ENCODE measurements at regions of chr11 and their contacts with region 1.

Region 1: GRCh38 chr11:72471005-72471898 is 36.9 kb upstream of the CLPB start:
- DNase-seq: peak; percentile 14 to 81 (median 44)
- ATAC-seq: peak; percentile 88
- H3K4me3 ChIP-seq: no peak overlapping the region
- H3K4me3 Mint-ChIP-seq: no peak overlapping the region
- H3K27ac ChIP-seq: no peak overlapping the region
- H3K27ac Mint-ChIP-seq: no peak overlapping the region
- H3K4me1 ChIP-seq: peaks cover 8% of the 10 kb centered on the region
- H3K4me1 Mint-ChIP-seq: peaks cover 4% of the 10 kb centered on the region
- H3K27me3 ChIP-seq: peaks cover 4 to 14% of the 10 kb centered on the region in 2 experiments
- H3K27me3 Mint-ChIP-seq: peaks cover 56% of the 10 kb centered on the region
- CTCF ChIP-seq: peak; percentile 86

Region 2: DNA sequence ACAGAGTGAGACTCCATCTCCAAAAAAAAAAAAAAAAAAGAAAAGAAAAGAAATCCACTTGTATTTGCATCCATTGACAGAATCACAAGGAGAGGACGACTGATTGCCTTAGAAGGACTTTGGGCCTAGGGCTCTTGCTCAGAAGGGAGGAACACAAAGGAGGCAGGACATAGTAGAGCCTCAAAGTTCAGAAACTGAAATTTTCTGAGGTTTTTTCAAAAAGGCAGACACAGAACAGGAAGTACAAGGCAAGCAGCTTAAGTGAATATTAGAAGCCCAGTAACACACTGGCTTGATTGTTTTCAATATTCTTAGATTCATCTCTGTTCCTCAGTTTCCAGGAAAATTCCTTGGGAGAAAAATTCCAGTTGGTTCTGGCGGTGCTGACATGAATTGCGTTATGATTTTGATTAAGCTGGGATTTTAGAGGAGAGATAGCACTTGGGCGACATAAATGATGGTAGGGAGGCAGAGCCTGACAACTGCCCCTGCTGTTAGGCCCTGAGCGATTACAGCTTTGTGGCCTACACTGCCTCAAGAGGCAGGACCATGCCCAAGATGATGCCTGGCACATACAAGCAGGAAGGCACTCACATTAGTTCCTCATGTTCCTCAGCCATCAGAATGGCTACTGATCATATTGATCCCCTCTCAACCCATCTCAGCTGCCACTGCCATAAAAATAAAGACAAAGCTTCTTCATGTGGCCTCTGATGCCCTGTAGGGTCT is 52.3 kb before region 1 on chr11:
- CTCF ChIA-PET with region 1: no interaction called
- POLR2A ChIA-PET with region 1: no interaction called
- intact Hi-C with region 1: no loop called
- DNase-seq: no peak
- ATAC-seq: no peak
- H3K4me3 ChIP-seq: no peak overlapping the region
- H3K4me3 Mint-ChIP-seq: no peak overlapping the region
- H3K27ac ChIP-seq: peak overlapping the region in 1 of 2 donors; percentile 8
- H3K27ac Mint-ChIP-seq: peak overlapping the region; percentile 67
- H3K4me1 ChIP-seq: peaks cover 18% of the 10 kb centered on the region
- H3K4me1 Mint-ChIP-seq: peaks cover 32% of the 10 kb centered on the region
- H3K27me3 ChIP-seq: no peaks in the 10 kb centered on the region
- H3K27me3 Mint-ChIP-seq: no peaks in the 10 kb centered on the region
- CTCF ChIP-seq: no peak

Region 3: DNA sequence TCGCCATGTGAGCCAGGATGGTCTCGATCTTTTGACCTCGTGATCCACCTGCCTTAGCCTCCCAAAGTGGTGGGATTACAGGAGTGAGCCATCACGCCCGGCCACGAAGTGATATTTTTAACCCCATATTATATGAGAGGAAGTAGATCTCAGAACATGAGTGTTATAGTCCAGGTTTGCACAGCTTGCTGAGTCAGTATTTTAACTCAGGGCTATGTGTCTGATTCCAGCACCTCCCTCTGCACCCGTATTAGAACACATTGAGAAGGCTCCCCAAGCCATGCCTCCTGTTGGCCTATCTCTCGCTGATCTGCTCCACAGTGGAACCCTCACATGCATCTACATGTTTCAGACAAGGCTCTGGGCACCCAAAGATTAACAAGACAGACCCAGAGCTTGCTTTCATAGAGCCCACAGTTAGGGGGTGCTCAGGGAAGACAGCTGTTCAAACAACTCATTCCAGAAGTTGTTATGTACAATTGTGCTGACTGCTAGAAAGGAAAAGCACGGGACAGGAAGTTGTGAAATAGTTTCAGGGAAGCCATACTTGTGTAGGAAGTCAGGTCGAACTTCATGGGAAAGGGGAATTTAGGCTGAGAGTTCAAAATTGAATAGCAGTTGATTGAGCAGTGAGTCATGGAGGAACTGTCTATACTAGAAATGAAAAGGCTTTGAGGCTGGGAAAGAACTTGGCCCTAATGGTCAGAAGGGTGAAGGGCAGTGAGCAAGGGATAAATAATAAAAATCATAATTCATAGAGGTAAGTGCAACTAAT is 12.3 kb after region 1 on chr11:
- CTCF ChIA-PET with region 1: interaction called, 12 read pairs
- POLR2A ChIA-PET with region 1: no interaction called
- intact Hi-C with region 1: no loop called
- DNase-seq: peak in 3 of 14 experiments; percentile 21 to 71 (median 61)
- ATAC-seq: no peak
- H3K4me3 ChIP-seq: no peak overlapping the region
- H3K4me3 Mint-ChIP-seq: no peak overlapping the region
- H3K27ac ChIP-seq: no peak overlapping the region
- H3K27ac Mint-ChIP-seq: no peak overlapping the region
- H3K4me1 ChIP-seq: peaks cover 14% of the 10 kb centered on the region
- H3K4me1 Mint-ChIP-seq: no peaks in the 10 kb centered on the region
- H3K27me3 ChIP-seq: no peaks in the 10 kb centered on the region
- H3K27me3 Mint-ChIP-seq: peaks cover 18% of the 10 kb centered on the region
- CTCF ChIP-seq: no peak

Region 4: DNA sequence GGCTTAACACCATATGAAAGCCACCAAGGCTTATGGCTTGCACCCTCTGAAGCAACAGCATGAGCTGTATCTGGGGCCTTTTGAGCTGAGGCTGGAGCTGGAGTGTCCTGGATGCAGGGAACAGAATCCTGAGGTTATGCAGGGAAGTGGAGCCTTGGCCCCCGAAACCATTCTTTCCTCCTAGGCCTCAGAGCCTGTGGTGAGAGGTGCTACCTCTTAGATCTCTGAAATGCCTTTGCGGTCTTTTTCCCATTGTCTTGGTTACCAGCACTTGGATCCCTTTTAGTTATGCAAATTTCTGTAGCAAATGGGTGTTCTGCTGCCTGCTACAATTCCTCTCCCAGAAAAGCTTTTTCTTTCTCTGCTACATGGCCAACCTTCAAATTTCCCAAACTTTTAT is 35.8 kb after region 1 on chr11:
- CTCF ChIA-PET with region 1: no interaction called
- POLR2A ChIA-PET with region 1: no interaction called
- intact Hi-C with region 1: no loop called
- DNase-seq: no peak
- ATAC-seq: no peak
- H3K4me3 ChIP-seq: no peak overlapping the region
- H3K4me3 Mint-ChIP-seq: no peak overlapping the region
- H3K27ac ChIP-seq: no peak overlapping the region
- H3K27ac Mint-ChIP-seq: no peak overlapping the region
- H3K4me1 ChIP-seq: no peaks in the 10 kb centered on the region
- H3K4me1 Mint-ChIP-seq: no peaks in the 10 kb centered on the region
- H3K27me3 ChIP-seq: no peaks in the 10 kb centered on the region
- H3K27me3 Mint-ChIP-seq: peaks cover 6% of the 10 kb centered on the region
- CTCF ChIP-seq: no peak

Region 5: DNA sequence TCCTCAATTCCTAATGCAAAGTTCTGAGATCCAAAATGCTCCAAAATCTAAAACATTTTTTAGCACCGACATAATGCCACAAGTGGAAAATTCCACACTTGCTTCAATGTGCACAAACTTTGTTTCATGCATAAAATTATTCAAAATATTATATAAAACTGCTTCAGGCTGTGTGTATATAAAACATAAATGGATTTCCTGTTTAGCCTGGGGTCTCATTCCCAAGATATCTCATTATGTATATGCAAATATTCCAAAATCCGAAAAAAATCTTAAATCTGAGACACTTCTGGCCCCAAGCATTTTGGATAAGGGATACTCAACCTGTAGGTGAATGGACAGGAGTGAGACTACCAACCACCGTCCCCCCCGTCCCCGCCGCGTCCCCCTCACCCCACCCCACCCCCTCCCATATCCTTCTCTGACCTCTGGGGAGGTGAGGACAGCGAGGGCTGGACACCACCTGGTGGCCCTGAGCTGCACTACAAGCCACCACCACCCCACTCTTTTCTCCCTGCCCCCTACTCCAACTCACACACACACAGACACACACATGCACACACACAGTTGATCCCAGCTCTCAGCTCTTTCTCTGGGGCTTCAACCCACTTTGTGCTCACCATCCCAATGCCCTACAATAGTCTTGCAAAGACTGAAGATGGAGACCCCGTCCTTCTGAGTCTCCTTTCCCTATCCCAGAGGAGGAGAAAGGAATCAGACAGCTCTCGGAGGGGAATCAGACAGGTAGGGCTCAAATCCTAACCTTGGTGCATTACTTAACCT is 102.0 kb after region 1 on chr11:
- CTCF ChIA-PET with region 1: interaction called, 7 read pairs
- POLR2A ChIA-PET with region 1: interaction called, 4 read pairs
- intact Hi-C with region 1: loop called in 1 of 2 experiments (anchors 2 kb)
- DNase-seq: peak in 7 of 14 experiments; percentile 11 to 63 (median 33)
- ATAC-seq: peak; percentile 48
- H3K4me3 ChIP-seq: no peak overlapping the region
- H3K4me3 Mint-ChIP-seq: no peak overlapping the region
- H3K27ac ChIP-seq: no peak overlapping the region
- H3K27ac Mint-ChIP-seq: no peak overlapping the region
- H3K4me1 ChIP-seq: no peaks in the 10 kb centered on the region
- H3K4me1 Mint-ChIP-seq: no peaks in the 10 kb centered on the region
- H3K27me3 ChIP-seq: no peaks in the 10 kb centered on the region
- H3K27me3 Mint-ChIP-seq: peaks cover 25% of the 10 kb centered on the region
- CTCF ChIP-seq: no peak

Region 6: GRCh38 chr11:72683782-72684200 is 212.5 kb after region 1 on chr11:
- CTCF ChIA-PET with region 1: interaction called, 5 read pairs
- POLR2A ChIA-PET with region 1: interaction called, 3 read pairs
- intact Hi-C with region 1: loop called (anchors 1 to 2 kb)
- DNase-seq: peak; percentile 49 to 76 (median 60)
- ATAC-seq: peak; percentile 86
- H3K4me3 ChIP-seq: no peak overlapping the region
- H3K4me3 Mint-ChIP-seq: no peak overlapping the region
- H3K27ac ChIP-seq: no peak overlapping the region
- H3K27ac Mint-ChIP-seq: no peak overlapping the region
- H3K4me1 ChIP-seq: peaks cover 4% of the 10 kb centered on the region
- H3K4me1 Mint-ChIP-seq: peaks cover 12% of the 10 kb centered on the region
- H3K27me3 ChIP-seq: no peaks in the 10 kb centered on the region
- H3K27me3 Mint-ChIP-seq: no peaks in the 10 kb centered on the region
- CTCF ChIP-seq: peak; percentile 88

Region 7: GRCh38 chr11:73242251-73243079 is 771.2 kb after region 1 on chr11:
- CTCF ChIA-PET with region 1: no interaction called
- POLR2A ChIA-PET with region 1: no interaction called
- intact Hi-C with region 1: loop called in 1 of 2 experiments (anchors 5 kb)
- DNase-seq: peak; percentile 43 to 80 (median 60)
- ATAC-seq: peak; percentile 91
- H3K4me3 ChIP-seq: no peak overlapping the region
- H3K4me3 Mint-ChIP-seq: no peak overlapping the region
- H3K27ac ChIP-seq: no peak overlapping the region
- H3K27ac Mint-ChIP-seq: no peak overlapping the region
- H3K4me1 ChIP-seq: peaks cover 9% of the 10 kb centered on the region
- H3K4me1 Mint-ChIP-seq: no peaks in the 10 kb centered on the region
- H3K27me3 ChIP-seq: no peaks in the 10 kb centered on the region
- H3K27me3 Mint-ChIP-seq: no peaks in the 10 kb centered on the region
- CTCF ChIP-seq: peak; percentile 84

Measured in CD4-positive, alpha-beta T cell (primary cell).